ENCODE measurements at regions of chr20 and their contacts with region 1.

Region 1: DNA sequence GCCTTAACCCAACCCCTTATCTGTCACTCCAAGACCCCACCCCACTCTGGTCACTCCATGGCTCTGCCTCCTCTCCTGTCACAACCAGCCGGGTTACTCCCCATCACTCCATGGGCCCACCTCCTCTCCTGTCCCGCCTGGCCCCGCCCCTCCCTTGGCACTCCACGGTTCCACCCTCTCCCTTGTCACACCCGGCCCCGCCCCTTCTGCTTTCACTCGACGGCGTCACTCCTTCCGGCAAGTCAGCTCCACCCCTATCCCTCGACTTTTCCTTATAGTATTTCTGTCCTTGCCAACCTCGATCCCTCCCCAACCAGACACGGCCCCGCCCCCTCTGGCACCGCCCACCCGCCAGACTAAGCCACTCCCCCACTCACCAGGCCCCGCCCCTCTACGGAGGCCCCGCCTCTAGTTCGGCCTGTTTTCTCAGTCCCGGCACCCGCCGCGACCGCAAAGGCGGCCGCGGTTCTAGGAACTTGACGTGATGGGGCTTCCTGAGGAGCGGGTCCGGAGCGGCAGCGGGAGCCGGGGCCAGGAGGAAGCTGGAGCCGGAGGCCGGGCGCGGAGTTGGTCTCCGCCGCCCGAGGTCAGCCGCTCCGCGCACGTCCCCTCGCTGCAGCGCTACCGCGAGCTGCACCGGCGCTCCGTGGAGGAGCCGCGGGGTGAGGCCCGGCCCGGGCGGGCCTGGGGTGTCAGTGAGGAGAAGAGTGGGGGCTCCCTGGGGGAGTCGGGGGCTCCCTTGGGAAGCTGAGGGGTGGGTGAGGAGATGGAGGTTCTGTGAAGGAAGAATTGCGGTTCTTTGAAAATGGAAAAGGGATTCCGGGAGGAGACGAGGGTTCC is at the start of gene ACSS2:
- DNase-seq: peak in 1 of 2 experiments; percentile 100
- H3K4me3 ChIP-seq: peak within 1 kb of the TSS; percentile 91
- H3K27ac ChIP-seq: peak within 1 kb of the TSS; percentile 83
- H3K4me1 ChIP-seq: peaks cover 40% of the 10 kb centered on the region
- H3K27me3 ChIP-seq: no peaks in the 10 kb centered on the region
- CTCF ChIP-seq: no peak
- total RNA-seq, gene ACSS2: 81.1 and 108 TPM in 2 replicates

Region 2: GRCh38 chr20:34891166-34892062 is 15.0 kb after region 1 on chr20:
- CTCF ChIA-PET with region 1: interaction called, 13 read pairs
- POLR2A ChIA-PET with region 1: interaction called, 6 read pairs
- intact Hi-C with region 1: no loop called
- DNase-seq: peak; percentile 19 to 90
- H3K4me3 ChIP-seq: peak overlapping the region; percentile 33; the same call in 1 of the 2 replicates
- H3K27ac ChIP-seq: peak overlapping the region; percentile 98
- H3K4me1 ChIP-seq: peaks cover 39% of the 10 kb centered on the region
- H3K27me3 ChIP-seq: no peaks in the 10 kb centered on the region
- CTCF ChIP-seq: no peak

Region 3: DNA sequence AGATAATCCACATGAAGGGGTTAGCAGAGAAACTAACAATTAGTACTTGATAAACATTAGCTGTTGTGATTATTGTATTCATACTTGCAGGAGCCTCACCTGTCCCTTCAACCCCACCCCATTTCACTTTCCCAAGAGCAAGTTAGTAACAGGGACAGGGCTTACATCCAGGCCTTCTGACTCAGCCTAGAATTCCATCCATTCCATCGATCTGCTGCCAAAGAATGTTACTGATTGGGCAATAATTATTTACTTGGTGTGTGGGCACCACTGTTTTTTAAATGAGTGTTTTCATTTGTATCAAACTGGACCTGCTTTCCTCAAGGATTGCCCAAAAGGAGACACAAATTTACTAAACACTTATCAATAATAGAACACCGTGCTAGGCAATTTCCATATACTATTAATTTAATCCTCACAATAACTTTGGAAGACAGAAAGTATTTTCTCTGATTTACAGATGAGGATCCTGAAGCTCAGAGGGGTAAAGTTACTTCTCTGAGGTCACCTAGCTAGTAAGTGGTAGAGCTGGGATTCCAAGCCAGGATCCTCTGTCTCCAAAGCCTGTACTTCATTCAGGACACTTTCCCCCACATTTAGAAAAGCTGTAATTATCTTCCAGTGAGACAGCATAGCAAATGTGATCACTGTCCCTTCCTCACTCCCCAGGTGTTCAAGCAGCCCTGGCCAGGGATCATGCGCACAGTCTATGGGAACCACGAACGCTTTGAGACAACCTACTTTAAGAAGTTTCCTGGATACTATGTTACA is 46.5 kb after region 1 on chr20:
- CTCF ChIA-PET with region 1: no interaction called
- POLR2A ChIA-PET with region 1: interaction called, 4 read pairs
- intact Hi-C with region 1: loop called (anchors 1 kb)
- DNase-seq: peak; percentile 65 to 96
- H3K4me3 ChIP-seq: peak overlapping the region; percentile 19; the same call in 1 of the 2 replicates
- H3K27ac ChIP-seq: peak overlapping the region; percentile 89
- H3K4me1 ChIP-seq: peaks cover 76% of the 10 kb centered on the region
- H3K27me3 ChIP-seq: no peaks in the 10 kb centered on the region
- CTCF ChIP-seq: no peak

Region 4: GRCh38 chr20:34980548-34981233 is 104.3 kb after region 1 on chr20:
- CTCF ChIA-PET with region 1: no interaction called
- POLR2A ChIA-PET with region 1: interaction called, 4 read pairs
- intact Hi-C with region 1: loop called (anchors 10 kb)
- DNase-seq: no peak
- H3K4me3 ChIP-seq: no peak overlapping the region
- H3K27ac ChIP-seq: no peak overlapping the region
- H3K4me1 ChIP-seq: peaks cover 18% of the 10 kb centered on the region
- H3K27me3 ChIP-seq: no peaks in the 10 kb centered on the region
- CTCF ChIP-seq: no peak

Region 5: DNA sequence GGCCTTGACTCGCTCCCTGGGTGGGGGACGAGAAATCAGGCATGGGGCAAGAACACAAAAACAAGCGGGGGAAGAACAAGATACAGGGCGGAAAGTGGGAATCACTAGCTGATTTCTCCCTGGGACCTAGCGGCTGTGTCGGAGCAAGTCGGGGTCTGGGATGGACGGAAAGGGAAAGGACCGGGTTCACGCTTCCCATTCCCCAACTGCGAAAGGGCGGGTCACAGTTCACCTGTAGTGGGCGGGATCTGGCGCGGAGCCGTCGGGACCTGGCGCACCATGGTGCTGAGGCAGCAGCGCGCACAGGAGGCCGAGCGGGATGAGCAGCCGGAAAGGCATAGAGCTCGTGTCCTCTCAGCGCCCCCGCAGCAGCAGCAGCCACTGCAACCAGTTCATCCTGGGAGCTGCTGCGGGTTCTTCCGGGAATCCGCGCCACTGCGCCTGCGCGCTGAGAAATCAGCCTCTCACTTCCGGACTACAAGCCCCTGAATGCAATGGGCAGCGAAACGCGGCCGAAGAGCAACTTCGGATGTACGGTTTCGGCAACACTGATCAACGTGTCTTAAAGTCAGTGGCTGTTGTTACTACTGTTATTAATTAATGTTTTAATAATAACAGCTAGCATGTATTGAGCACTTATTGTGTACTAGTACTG is 270.7 kb after region 1 on chr20 and contains the start of gene EDEM2:
- CTCF ChIA-PET with region 1: interaction called, 28 read pairs
- POLR2A ChIA-PET with region 1: interaction called, 4 read pairs
- intact Hi-C with region 1: no loop called
- DNase-seq: peak; percentile 89 to 96
- H3K4me3 ChIP-seq: peak within 1 kb of the TSS; percentile 93
- H3K27ac ChIP-seq: peak within 1 kb of the TSS; percentile 94
- H3K4me1 ChIP-seq: peaks cover 14% of the 10 kb centered on the region
- H3K27me3 ChIP-seq: no peaks in the 10 kb centered on the region
- CTCF ChIP-seq: no peak
- total RNA-seq, gene EDEM2: 28.6 and 34.9 TPM in 2 replicates

Region 6: DNA sequence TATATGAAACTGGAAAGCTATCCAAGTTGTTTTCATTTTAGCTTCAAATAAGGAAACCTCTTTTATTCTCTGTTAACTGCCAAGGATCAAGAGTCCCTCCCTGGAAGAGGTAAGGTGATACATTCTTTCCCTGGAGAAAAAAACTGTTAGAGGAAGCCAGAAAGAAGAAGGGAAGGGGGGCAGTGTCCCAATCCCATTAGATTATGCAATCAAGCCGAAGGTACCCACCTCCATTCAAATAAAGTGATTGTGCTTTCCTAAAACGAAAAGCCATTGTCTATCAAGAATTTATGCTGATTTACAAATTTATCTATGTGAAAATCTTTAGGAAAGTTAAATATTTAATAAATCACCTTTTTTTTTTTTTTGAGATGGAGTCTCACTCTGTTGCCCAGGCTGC is 544.9 kb after region 1 on chr20:
- CTCF ChIA-PET with region 1: no interaction called
- POLR2A ChIA-PET with region 1: no interaction called
- intact Hi-C with region 1: no loop called
- DNase-seq: no peak
- H3K4me3 ChIP-seq: no peak overlapping the region
- H3K27ac ChIP-seq: no peak overlapping the region
- H3K4me1 ChIP-seq: no peaks in the 10 kb centered on the region
- H3K27me3 ChIP-seq: no peaks in the 10 kb centered on the region
- CTCF ChIP-seq: no peak

Measured in PC-9 (cell line).